Activated CD4-positive, alpha-beta T cell treated with anti-CD3 and anti-CD28 coated beads, Interleukin-2, amount 10 ng/mL, durations not matched to agents 24 days and 14 days (primary cell): ENCODE measurements at regions of chr10 and their contacts with region 1.

Region 1: DNA sequence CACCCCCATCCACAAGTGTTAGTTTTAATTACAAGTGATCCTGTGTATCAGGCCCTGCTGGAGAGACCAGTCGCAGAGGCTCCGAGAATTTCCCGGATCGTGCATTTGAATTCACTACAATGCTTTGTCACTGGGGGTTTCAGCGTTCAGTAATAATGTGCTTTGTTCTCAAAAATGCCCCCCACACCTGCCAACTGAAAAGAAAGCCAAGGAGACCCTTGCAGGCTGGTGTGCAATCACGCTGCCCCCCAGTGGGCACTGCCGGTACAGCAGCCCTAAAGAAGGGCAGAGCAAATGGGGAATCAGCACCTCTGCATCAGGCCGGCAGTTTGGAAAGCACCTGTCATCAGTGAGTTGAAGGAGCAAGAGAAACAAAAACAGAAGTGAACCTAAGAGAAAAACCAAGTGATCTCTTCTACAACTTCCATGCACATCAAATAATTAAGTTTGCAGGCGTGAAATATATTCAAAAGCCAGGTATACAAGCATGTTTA is 177.6 kb downstream of the PARD3 start:
- DNase-seq: peak; percentile 90
- H3K4me3 Mint-ChIP-seq: no peak overlapping the region
- H3K27ac Mint-ChIP-seq: no peak overlapping the region
- H3K4me1 Mint-ChIP-seq: peaks cover 2% of the 10 kb centered on the region
- H3K27me3 Mint-ChIP-seq: no peaks in the 10 kb centered on the region

Region 2: GRCh38 chr10:33193057-33193700 is 1444.3 kb before region 1 on chr10:
- intact Hi-C with region 1: loop called (anchors 1 kb)
- DNase-seq: peak; percentile 90
- H3K4me3 Mint-ChIP-seq: no peak overlapping the region
- H3K27ac Mint-ChIP-seq: no peak overlapping the region
- H3K4me1 Mint-ChIP-seq: no peaks in the 10 kb centered on the region
- H3K27me3 Mint-ChIP-seq: peaks cover 45% of the 10 kb centered on the region

Region 3: GRCh38 chr10:34522546-34522945 is 114.9 kb before region 1 on chr10:
- intact Hi-C with region 1: loop called (anchors 5 kb)
- DNase-seq: no peak
- H3K4me3 Mint-ChIP-seq: no peak overlapping the region
- H3K27ac Mint-ChIP-seq: no peak overlapping the region
- H3K4me1 Mint-ChIP-seq: no peaks in the 10 kb centered on the region
- H3K27me3 Mint-ChIP-seq: peaks cover 7% of the 10 kb centered on the region